Endothelial cell of umbilical vein (primary cell): ENCODE measurements at regions of chr22 and their contacts with region 1.

Region 1: DNA sequence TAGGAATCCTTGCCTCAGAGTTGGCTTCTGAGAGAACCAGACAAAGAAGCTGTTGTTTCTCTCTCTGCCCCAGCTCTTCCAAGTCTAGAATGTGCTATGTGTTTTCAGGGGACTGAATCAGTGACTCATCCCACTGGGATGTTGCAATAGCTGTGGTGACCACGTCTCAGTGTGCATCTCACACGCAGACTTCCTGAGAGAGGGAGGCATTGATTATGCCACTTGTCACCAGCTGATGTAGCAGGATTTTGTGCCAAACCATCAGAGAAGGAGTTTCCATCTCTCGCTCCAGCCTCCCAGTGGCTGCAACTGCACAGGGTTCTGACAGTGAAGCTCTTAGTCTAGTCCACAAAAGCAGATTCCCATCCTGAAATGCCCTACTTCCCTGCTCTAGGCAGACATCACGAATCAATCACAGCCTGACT is 455.8 kb downstream of the MIAT start:
- DNase-seq: peak; percentile 86
- H3K4me3 ChIP-seq: no peak overlapping the region
- H3K27ac ChIP-seq: peak overlapping the region; percentile 93
- H3K4me1 ChIP-seq: peaks cover 63% of the 10 kb centered on the region
- H3K27me3 ChIP-seq: no peaks in the 10 kb centered on the region
- CTCF ChIP-seq: no peak
- POLR2A ChIP-seq: no peak

Region 2: DNA sequence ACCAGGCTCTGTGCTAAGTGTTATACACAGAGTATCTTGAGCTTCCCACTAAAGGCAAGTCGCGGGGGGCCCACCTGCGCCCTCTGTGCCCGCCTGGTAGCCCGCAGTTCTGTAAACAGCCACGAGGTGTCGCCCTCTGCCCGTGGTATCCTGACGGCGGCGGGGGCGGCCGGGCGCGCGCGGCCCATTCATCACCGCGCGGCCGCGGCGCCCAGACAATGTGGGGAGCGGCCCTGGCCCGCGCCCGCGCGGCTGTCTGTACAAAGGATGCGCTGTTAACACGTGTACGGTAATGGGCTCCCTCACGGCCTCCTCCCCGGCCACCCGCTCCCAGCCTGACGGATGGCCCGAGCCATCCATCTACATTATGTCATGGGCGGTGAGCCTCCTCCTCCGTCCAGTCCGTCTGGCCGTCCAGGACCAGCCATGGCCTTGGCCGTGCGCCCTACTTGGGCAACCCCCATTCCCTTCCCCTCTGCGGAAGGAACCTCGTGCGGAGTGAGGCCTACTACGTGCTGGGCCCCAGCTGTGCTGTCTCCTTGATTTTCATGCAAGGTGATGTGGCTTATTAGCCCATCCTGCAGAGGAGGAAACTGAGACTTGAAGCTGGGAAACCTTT is 356.4 kb before region 1 on chr22:
- CTCF ChIA-PET with region 1: interaction called, 3 read pairs
- POLR2A ChIA-PET with region 1: no interaction called
- dilution Hi-C with region 1: no loop called
- intact Hi-C with region 1: loop called (anchors 10 kb)
- DNase-seq: peak; percentile 46
- H3K4me3 ChIP-seq: peak overlapping the region in 2 of 3 experiments; percentile 13 to 29
- H3K27ac ChIP-seq: no peak overlapping the region
- H3K4me1 ChIP-seq: peaks cover 5% of the 10 kb centered on the region
- H3K27me3 ChIP-seq: no peaks in the 10 kb centered on the region
- CTCF ChIP-seq: peak; percentile 75 to 88
- POLR2A ChIP-seq: no peak

Region 3: GRCh38 chr22:27150544-27150941 is 37.3 kb after region 1 on chr22:
- CTCF ChIA-PET with region 1: interaction called, 6 read pairs
- POLR2A ChIA-PET with region 1: no interaction called
- dilution Hi-C with region 1: no loop called
- intact Hi-C with region 1: loop called (anchors 1 kb)
- DNase-seq: no peak
- H3K4me3 ChIP-seq: no peak overlapping the region
- H3K27ac ChIP-seq: no peak overlapping the region
- H3K4me1 ChIP-seq: peaks cover 35% of the 10 kb centered on the region
- H3K27me3 ChIP-seq: no peaks in the 10 kb centered on the region
- CTCF ChIP-seq: no peak
- POLR2A ChIP-seq: no peak

Region 4: DNA sequence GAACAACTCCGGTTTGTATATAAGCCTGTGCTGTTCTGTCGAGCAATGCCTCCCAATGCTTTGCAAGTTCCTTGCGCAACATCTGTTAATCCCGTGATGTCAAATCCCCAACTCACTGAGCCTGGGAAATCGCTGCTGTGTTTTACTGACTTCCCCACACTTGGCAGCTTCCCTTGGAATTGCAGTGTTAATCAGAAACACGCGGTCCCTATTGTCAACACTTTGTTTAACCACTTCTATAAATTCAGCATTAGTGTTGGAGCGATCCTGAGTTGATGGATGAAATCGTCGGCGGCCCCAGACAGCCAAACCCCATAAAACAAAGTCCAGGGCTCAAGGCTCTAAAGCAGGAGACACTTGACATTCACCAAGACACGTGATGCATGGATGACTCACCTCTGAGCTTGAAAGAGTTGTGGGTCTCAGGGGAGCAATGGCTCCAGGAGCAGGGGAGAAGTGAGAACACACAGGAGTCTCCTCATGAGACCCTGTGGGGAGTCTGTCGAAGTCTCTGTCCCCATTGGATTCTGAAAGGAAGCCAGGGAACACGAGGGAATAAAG is 99.5 kb after region 1 on chr22:
- CTCF ChIA-PET with region 1: no interaction called
- POLR2A ChIA-PET with region 1: no interaction called
- dilution Hi-C with region 1: no loop called
- intact Hi-C with region 1: loop called (anchors 1 kb)
- DNase-seq: peak; percentile 96
- H3K4me3 ChIP-seq: no peak overlapping the region
- H3K27ac ChIP-seq: peak overlapping the region; percentile 71
- H3K4me1 ChIP-seq: peaks cover 21% of the 10 kb centered on the region
- H3K27me3 ChIP-seq: no peaks in the 10 kb centered on the region
- CTCF ChIP-seq: no peak
- POLR2A ChIP-seq: no peak

Region 5: DNA sequence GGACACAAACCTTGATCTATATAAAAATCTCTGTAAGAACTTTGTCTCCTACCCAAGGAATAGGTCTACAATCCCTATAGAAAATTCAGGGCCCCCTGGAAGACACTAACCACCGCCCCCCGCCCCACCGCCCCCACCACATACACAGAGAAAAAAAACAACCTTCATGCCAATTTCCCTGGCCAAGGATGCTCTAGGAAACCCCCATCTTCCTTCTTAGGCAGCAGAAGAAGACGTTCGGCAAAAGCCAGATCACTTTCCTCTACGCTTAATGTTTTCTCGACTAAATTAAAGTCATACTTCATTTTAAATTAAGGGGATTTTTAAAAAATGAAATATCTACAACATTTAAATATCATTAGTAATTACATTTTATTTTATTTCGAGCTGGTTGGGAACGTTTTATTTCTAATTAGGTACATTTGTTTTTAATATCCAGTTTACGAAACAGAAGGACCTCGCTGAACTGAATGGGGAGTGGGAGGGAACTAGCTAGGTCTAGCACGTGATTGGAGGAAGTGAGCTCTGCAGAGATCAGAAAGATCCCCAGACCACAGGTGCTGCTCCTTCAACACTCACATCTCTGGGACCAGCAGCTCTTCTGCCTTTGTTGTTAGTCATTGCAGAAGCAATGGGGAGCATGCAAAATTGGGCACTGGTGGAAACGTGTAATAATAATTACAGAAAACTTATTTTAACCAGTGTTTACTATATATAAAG is 216.1 kb after region 1 on chr22:
- CTCF ChIA-PET with region 1: no interaction called
- POLR2A ChIA-PET with region 1: no interaction called
- dilution Hi-C with region 1: no loop called
- intact Hi-C with region 1: no loop called
- DNase-seq: no peak
- H3K4me3 ChIP-seq: no peak overlapping the region
- H3K27ac ChIP-seq: no peak overlapping the region
- H3K4me1 ChIP-seq: no peaks in the 10 kb centered on the region
- H3K27me3 ChIP-seq: peaks cover 0 to 6% of the 10 kb centered on the region in 2 experiments
- CTCF ChIP-seq: no peak
- POLR2A ChIP-seq: no peak

Region 6: GRCh38 chr22:27420817-27421361 is 307.7 kb after region 1 on chr22:
- CTCF ChIA-PET with region 1: no interaction called
- POLR2A ChIA-PET with region 1: no interaction called
- dilution Hi-C with region 1: no loop called
- intact Hi-C with region 1: loop called (anchors 1 kb)
- DNase-seq: peak; percentile 98
- H3K4me3 ChIP-seq: no peak overlapping the region
- H3K27ac ChIP-seq: peak overlapping the region; percentile 97
- H3K4me1 ChIP-seq: peaks cover 43% of the 10 kb centered on the region
- H3K27me3 ChIP-seq: peaks cover 0 to 2% of the 10 kb centered on the region in 2 experiments
- CTCF ChIP-seq: no peak
- POLR2A ChIP-seq: peak; percentile 38